ENCODE measurements at regions of chr12 and their contacts with region 1.

Region 1: DNA sequence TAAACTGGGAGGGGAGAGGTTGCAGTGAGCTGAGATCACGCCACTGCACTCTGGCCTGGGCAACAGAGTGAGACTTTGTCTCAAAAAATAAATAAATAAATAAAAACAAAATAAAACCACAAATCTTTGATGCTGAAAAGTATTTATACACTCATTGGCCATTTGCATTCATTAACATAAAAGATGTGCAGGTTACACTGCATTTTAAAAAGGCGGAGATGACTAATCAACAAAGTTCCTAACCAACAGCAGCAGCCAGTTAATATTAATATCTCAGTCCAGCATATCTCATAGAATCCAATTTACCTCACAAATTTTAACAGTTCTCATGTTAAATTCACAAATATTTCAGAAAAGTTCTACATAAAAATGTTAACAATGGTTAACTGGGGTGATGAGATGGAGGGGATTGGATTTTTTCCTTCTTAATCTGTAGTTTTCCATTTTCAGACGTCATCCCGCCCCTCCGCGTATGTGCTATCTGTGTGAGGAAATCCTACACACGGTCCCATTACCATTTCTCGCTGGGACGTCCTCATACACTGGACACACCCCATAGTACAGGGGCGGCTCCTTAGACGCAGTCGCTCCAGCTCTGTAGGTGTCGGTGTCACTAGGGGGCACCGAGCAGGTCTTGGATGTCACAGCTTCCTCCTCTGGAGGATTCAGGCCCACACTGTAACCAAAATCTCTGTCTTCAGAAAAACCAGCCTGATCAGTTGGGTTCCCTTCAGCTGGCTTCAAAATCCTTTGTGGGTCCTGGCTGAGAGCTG is 7.3 kb downstream of the ANKLE2 start:
- DNase-seq: no peak
- ATAC-seq: peak in 2 of 4 experiments; percentile 29 to 34
- H3K4me3 ChIP-seq: no peak overlapping the region
- H3K4me3 Mint-ChIP-seq: no peak overlapping the region
- H3K27ac ChIP-seq: no peak overlapping the region
- H3K27ac Mint-ChIP-seq: no peak overlapping the region
- H3K4me1 ChIP-seq: peaks cover 0 to 4% of the 10 kb centered on the region in 2 experiments
- H3K4me1 Mint-ChIP-seq: peaks cover 5 to 8% (median 8%) of the 10 kb centered on the region in 3 donors
- H3K27me3 ChIP-seq: no peaks in the 10 kb centered on the region
- H3K27me3 Mint-ChIP-seq: no peaks in the 10 kb centered on the region

Region 2: GRCh38 chr12:132710422-132711168 is 43.8 kb before region 1 on chr12 and contains the start of gene PGAM5:
- CTCF ChIA-PET with region 1: no interaction called
- POLR2A ChIA-PET with region 1: interaction called in 1 of 2 experiments, 10 read pairs
- DNase-seq: peak; percentile 79 to 98 (median 93)
- ATAC-seq: peak; percentile 93 to 96 (median 95)
- H3K4me3 ChIP-seq: peak within 1 kb of the TSS; percentile 70 to 85
- H3K4me3 Mint-ChIP-seq: peak within 1 kb of the TSS; percentile 83 to 89 (median 88)
- H3K27ac ChIP-seq: peak within 1 kb of the TSS; percentile 96
- H3K27ac Mint-ChIP-seq: peak within 1 kb of the TSS; percentile 90
- H3K4me1 ChIP-seq: peaks cover 9 to 23% of the 10 kb centered on the region in 2 experiments
- H3K4me1 Mint-ChIP-seq: peaks cover 21 to 32% (median 25%) of the 10 kb centered on the region in 3 donors
- H3K27me3 ChIP-seq: no peaks in the 10 kb centered on the region
- H3K27me3 Mint-ChIP-seq: no peaks in the 10 kb centered on the region
- total RNA-seq, gene PGAM5: 21.3 to 32.4 (median 31.5) TPM